ENCODE measurements at regions of chr1 and their contacts with region 1.

Region 1: GRCh38 chr1:15323351-15323988 is 76.4 kb downstream of the FHAD1 start:
- DNase-seq: peak; percentile 82
- ATAC-seq: peak; percentile 91
- H3K4me3 Mint-ChIP-seq: no peak overlapping the region
- H3K27ac Mint-ChIP-seq: no peak overlapping the region
- H3K4me1 Mint-ChIP-seq: no peaks in the 10 kb centered on the region
- H3K27me3 Mint-ChIP-seq: peaks cover 22% of the 10 kb centered on the region

Region 2: GRCh38 chr1:15311880-15312279 is 11.6 kb before region 1 on chr1:
- CTCF ChIA-PET with region 1: interaction called, 18 read pairs
- DNase-seq: no peak
- ATAC-seq: no peak
- H3K4me3 Mint-ChIP-seq: no peak overlapping the region
- H3K27ac Mint-ChIP-seq: no peak overlapping the region
- H3K4me1 Mint-ChIP-seq: peaks cover 4% of the 10 kb centered on the region
- H3K27me3 Mint-ChIP-seq: peaks cover 2% of the 10 kb centered on the region

Region 3: DNA sequence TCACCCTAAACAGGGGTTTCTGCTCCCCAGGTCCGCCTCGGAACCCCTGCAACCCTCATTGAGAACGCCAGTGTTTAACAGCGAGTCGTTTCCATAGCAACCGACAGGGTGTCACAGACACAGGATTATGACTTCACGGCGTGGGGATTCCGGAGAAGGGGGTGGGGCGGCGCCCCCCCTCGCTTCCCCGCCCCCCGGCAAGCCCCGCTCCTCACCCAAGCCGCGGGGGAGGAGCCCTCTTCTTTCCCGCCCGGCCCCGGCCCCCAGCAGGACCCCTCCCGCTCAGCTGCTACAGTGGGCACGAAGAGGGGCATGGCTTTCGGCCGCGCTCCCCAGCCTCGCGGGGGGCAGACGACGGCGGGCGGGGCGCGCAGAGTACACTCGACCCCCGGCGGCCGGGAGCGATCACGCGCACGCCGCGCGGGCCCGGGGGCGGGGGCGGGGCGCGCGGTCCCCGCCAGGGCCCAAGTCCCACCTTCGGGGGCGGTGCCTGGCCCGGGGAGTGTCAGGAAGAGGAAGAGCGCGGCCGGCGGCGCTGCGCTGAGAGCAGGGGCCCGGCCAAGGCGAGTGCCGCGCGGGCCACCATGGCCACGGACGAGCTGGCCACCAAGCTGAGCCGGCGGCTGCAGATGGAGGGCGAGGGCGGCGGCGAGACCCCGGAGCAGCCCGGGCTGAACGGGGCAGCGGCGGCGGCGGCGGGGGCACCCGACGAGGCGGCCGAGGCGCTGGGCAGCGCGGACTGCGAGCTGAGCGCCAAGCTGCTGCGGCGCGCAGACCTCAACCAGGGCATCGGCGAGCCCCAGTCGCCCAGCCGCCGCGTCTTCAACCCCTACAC is 86.1 kb after region 1 on chr1 and contains the start of gene EFHD2:
- CTCF ChIA-PET with region 1: interaction called, 29 read pairs
- DNase-seq: peak; percentile 88
- ATAC-seq: peak; percentile 88
- H3K4me3 Mint-ChIP-seq: peak within 1 kb of the TSS; percentile 91
- H3K27ac Mint-ChIP-seq: peak within 1 kb of the TSS; percentile 86
- H3K4me1 Mint-ChIP-seq: peaks cover 35% of the 10 kb centered on the region
- H3K27me3 Mint-ChIP-seq: peaks cover 28% of the 10 kb centered on the region
- total RNA-seq, gene EFHD2: 95.4 to 98.9 TPM

Region 4: GRCh38 chr1:15424146-15424667 is 100.7 kb after region 1 on chr1:
- CTCF ChIA-PET with region 1: interaction called, 27 read pairs
- DNase-seq: no peak
- ATAC-seq: no peak
- H3K4me3 Mint-ChIP-seq: no peak overlapping the region
- H3K27ac Mint-ChIP-seq: no peak overlapping the region
- H3K4me1 Mint-ChIP-seq: peaks cover 28% of the 10 kb centered on the region
- H3K27me3 Mint-ChIP-seq: no peaks in the 10 kb centered on the region

Region 5: GRCh38 chr1:15444468-15445389 is 121.3 kb after region 1 on chr1:
- CTCF ChIA-PET with region 1: interaction called, 12 read pairs
- DNase-seq: no peak
- ATAC-seq: no peak
- H3K4me3 Mint-ChIP-seq: no peak overlapping the region
- H3K27ac Mint-ChIP-seq: no peak overlapping the region
- H3K4me1 Mint-ChIP-seq: peaks cover 11% of the 10 kb centered on the region
- H3K27me3 Mint-ChIP-seq: peaks cover 6% of the 10 kb centered on the region

Measured in activated CD8-positive, alpha-beta memory T cell treated with anti-CD3 and anti-CD28 coated beads, Interleukin-2, amount 10 ng/mL, durations not matched to agents 7 days and 5 days (primary cell).